ENCODE measurements at regions of chr2 and their contacts with region 1.

Region 1: DNA sequence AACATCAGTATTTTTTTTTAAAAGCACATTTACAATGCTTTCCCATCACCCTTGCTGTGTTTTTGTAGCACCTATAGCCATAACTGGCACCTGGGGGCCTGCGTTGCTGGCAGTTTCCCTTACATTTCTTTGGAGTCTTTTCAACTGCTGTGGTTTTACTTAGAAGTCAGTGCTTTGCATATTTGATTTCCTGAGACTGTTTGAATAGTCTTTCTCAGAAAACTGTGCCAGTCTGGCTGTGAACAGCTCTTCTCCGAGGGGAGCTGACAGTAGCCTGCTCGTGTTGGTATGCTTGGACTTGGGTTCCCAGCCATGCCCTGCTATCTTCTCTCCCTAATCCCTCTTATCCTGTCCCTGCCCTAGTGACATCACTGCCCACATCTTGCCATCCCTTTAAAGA is 81.5 kb downstream of the DPP4 start:
- DNase-seq: peak; percentile 78
- H3K4me3 Mint-ChIP-seq: peak overlapping the region; percentile 77
- H3K27ac Mint-ChIP-seq: peak overlapping the region; percentile 97
- H3K4me1 Mint-ChIP-seq: peaks cover 76% of the 10 kb centered on the region
- H3K27me3 Mint-ChIP-seq: no peaks in the 10 kb centered on the region

Region 2: GRCh38 chr2:161886248-161886647 is 106.3 kb before region 1 on chr2:
- CTCF ChIA-PET with region 1: no interaction called
- DNase-seq: no peak
- H3K4me3 Mint-ChIP-seq: no peak overlapping the region
- H3K27ac Mint-ChIP-seq: no peak overlapping the region
- H3K4me1 Mint-ChIP-seq: no peaks in the 10 kb centered on the region
- H3K27me3 Mint-ChIP-seq: no peaks in the 10 kb centered on the region

Region 3: DNA sequence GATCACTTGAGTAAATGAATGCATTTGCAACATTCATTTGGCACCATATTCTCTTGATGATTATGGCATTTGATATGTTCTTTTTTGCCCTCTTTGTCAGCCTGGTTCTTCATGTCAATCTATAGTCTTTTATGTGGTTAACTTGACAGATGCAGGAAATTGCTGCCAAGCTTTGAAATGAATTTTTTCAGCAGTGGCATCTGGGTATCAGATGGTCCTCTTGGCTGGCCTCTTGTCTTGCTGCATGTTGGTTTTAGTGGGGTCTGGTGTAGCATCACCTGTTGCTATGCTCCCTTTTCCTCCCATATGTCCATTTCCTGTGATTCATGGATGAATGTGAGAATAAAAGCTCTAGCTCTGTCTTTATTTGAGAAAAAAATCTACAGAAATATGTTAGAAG is 38.4 kb before region 1 on chr2:
- CTCF ChIA-PET with region 1: interaction called, 33 read pairs
- DNase-seq: peak; percentile 40
- H3K4me3 Mint-ChIP-seq: no peak overlapping the region
- H3K27ac Mint-ChIP-seq: peak overlapping the region; percentile 96
- H3K4me1 Mint-ChIP-seq: peaks cover 75% of the 10 kb centered on the region
- H3K27me3 Mint-ChIP-seq: no peaks in the 10 kb centered on the region

Measured in activated naive CD4-positive, alpha-beta T cell treated with anti-CD3 and anti-CD28 coated beads, Interleukin-2, amount 10 ng/mL, durations not matched to agents 7 days and 5 days (primary cell).